Endothelial cell of umbilical vein (primary cell): ENCODE measurements at regions of chr13 and their contacts with region 1.

Region 1: GRCh38 chr13:90867336-90867683 is 480.2 kb upstream of the MIR17HG start:
- DNase-seq: peak; percentile 36
- H3K4me3 ChIP-seq: no peak overlapping the region
- H3K27ac ChIP-seq: no peak overlapping the region
- H3K4me1 ChIP-seq: no peaks in the 10 kb centered on the region
- H3K27me3 ChIP-seq: no peaks in the 10 kb centered on the region
- CTCF ChIP-seq: peak; percentile 45 to 58
- POLR2A ChIP-seq: no peak

Region 2: GRCh38 chr13:89361909-89362308 is 1505.4 kb before region 1 on chr13:
- CTCF ChIA-PET with region 1: interaction called, 3 read pairs
- POLR2A ChIA-PET with region 1: no interaction called
- dilution Hi-C with region 1: no loop called
- intact Hi-C with region 1: loop called (anchors 5 kb)
- DNase-seq: peak; percentile 26
- H3K4me3 ChIP-seq: no peak overlapping the region
- H3K27ac ChIP-seq: no peak overlapping the region
- H3K4me1 ChIP-seq: no peaks in the 10 kb centered on the region
- H3K27me3 ChIP-seq: no peaks in the 10 kb centered on the region
- CTCF ChIP-seq: peak in 1 of 2 donors; percentile 15
- POLR2A ChIP-seq: no peak

Region 3: DNA sequence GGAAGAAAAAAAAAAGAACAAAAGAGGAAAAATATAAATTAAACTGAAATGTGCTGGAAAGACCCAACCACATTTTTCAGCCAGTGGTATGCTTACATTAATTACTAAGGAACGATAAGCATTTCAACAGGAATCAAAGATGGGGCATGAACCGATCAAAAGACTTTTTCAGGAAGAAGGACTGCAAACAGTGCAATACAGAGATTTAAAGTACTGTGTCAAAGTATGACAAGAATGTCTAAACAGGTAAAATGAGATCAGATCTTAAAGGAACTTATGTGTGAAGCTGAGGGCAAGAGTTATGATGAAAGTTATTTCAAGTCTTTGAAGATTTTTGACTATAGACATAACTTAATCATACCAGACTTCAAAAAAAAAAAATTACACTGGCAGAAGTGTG is 1434.3 kb before region 1 on chr13:
- CTCF ChIA-PET with region 1: no interaction called
- POLR2A ChIA-PET with region 1: no interaction called
- dilution Hi-C with region 1: no loop called
- intact Hi-C with region 1: loop called (anchors 10 kb)
- DNase-seq: peak; percentile 26
- H3K4me3 ChIP-seq: no peak overlapping the region
- H3K27ac ChIP-seq: no peak overlapping the region
- H3K4me1 ChIP-seq: no peaks in the 10 kb centered on the region
- H3K27me3 ChIP-seq: no peaks in the 10 kb centered on the region
- CTCF ChIP-seq: no peak
- POLR2A ChIP-seq: no peak

Region 4: DNA sequence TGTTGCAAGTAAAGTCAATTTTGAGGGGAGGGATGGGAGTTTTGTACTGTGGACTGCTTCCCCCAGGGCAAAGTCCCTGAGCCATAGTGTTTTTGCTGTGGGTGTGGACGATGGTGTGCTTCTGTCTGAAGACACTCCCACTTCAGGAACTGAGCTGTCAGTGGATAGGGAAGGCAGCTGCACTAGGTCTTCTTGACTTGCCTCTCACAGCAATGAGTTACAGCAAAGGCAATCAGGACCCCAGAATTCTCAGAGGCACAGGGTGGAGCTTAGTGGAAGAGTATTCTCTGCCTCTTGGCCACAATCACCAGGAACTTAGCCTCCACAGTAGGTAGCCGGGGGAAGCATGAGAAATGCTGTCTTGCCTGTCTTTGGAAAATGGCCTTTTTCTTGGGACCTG is 936.4 kb before region 1 on chr13:
- CTCF ChIA-PET with region 1: no interaction called
- POLR2A ChIA-PET with region 1: no interaction called
- dilution Hi-C with region 1: no loop called
- intact Hi-C with region 1: loop called (anchors 10 kb)
- DNase-seq: no peak
- H3K4me3 ChIP-seq: no peak overlapping the region
- H3K27ac ChIP-seq: no peak overlapping the region
- H3K4me1 ChIP-seq: no peaks in the 10 kb centered on the region
- H3K27me3 ChIP-seq: no peaks in the 10 kb centered on the region
- CTCF ChIP-seq: no peak
- POLR2A ChIP-seq: no peak

Region 5: DNA sequence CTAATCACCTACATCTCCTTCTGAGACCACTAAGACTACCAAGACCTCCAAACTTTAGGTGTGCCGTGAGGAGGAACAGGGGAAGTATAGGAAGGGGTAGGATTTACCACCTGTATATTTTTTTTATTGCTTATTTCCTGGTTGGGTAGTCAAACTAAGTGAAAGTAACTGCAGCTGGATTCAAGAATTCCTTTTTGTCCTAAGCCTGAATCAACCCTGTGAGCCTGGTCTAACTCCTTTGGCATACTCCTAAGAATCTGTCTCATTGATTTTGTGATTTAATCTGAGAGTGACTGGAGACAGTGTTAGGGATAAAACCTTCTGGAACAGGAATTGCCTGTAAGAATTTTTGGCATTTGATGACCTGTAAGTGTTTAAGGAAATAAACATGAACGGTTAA is 43.3 kb before region 1 on chr13:
- CTCF ChIA-PET with region 1: no interaction called
- POLR2A ChIA-PET with region 1: no interaction called
- dilution Hi-C with region 1: no loop called
- intact Hi-C with region 1: no loop called
- DNase-seq: no peak
- H3K4me3 ChIP-seq: no peak overlapping the region
- H3K27ac ChIP-seq: no peak overlapping the region
- H3K4me1 ChIP-seq: no peaks in the 10 kb centered on the region
- H3K27me3 ChIP-seq: no peaks in the 10 kb centered on the region
- CTCF ChIP-seq: no peak
- POLR2A ChIP-seq: no peak

Region 6: DNA sequence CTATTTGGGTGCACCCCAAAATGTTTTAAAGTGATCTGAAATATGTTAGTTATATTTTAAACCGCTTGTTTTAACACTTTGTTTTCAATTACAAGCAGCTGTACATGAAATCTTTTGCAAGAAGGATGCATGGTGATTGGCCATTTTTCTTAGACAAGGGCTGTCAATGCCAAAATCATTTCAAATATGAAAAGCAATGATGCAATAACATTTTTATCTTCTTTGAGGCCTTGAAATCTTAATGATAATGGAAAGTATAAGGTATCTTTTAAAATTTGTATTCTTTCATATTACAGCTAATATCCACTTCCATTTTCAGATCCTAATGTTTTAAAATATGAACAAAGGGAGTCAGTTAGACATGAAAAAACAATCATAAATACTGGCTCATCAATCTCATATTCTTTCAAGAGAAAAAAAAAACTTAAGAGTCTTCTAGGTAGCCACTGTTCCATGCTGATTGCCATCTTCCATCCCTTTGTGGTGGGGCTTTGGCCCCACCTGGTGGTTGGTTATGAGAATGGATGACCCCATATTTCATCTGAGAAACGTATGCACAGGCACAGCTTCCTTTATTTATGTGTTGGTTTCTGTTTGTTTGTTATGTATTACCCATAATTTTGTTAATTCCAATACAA is 149.8 kb after region 1 on chr13:
- CTCF ChIA-PET with region 1: no interaction called
- POLR2A ChIA-PET with region 1: no interaction called
- dilution Hi-C with region 1: no loop called
- intact Hi-C with region 1: loop called (anchors 5 kb)
- DNase-seq: peak; percentile 12
- H3K4me3 ChIP-seq: no peak overlapping the region
- H3K27ac ChIP-seq: no peak overlapping the region
- H3K4me1 ChIP-seq: no peaks in the 10 kb centered on the region
- H3K27me3 ChIP-seq: no peaks in the 10 kb centered on the region
- CTCF ChIP-seq: peak; percentile 69 to 72
- POLR2A ChIP-seq: no peak